Activated CD4-positive, alpha-beta T cell treated with anti-CD3 and anti-CD28 coated beads, Interleukin-2, amount 10 ng/mL, durations not matched to agents 24 days and 14 days (primary cell): ENCODE measurements at regions of chr5 and their contacts with region 1.

Region 1: DNA sequence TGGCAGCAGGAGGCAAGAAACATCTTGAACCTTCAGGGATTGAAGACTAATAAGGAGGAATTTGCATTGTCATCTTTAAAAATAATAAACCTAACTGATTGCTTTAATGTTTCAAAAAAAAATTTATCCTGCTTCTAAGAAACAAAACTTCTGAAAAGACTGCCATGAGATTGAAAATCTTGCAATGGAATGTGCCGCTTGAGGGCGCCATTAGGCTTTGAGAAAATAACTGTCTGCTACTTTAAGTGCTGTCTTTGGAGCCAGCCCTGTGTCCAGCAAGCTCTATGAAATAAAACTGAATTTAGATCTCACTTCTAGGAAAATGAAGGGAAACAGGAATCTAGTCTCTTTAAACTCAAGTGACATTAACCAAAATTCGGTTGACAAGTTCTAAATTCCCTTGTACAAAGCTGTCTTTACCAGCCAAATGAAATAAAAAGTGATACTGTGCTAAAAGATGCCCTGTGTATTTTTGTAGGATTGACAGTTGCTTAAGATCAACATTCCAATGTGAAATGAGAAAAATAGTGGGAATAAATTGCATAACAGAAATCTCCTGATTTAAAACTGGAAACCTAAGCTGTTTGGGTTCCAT is 79.4 kb downstream of the ESM1 start:
- DNase-seq: peak; percentile 92
- H3K4me3 Mint-ChIP-seq: no peak overlapping the region
- H3K27ac Mint-ChIP-seq: no peak overlapping the region
- H3K4me1 Mint-ChIP-seq: peaks cover 50% of the 10 kb centered on the region
- H3K27me3 Mint-ChIP-seq: peaks cover 40% of the 10 kb centered on the region

Region 2: DNA sequence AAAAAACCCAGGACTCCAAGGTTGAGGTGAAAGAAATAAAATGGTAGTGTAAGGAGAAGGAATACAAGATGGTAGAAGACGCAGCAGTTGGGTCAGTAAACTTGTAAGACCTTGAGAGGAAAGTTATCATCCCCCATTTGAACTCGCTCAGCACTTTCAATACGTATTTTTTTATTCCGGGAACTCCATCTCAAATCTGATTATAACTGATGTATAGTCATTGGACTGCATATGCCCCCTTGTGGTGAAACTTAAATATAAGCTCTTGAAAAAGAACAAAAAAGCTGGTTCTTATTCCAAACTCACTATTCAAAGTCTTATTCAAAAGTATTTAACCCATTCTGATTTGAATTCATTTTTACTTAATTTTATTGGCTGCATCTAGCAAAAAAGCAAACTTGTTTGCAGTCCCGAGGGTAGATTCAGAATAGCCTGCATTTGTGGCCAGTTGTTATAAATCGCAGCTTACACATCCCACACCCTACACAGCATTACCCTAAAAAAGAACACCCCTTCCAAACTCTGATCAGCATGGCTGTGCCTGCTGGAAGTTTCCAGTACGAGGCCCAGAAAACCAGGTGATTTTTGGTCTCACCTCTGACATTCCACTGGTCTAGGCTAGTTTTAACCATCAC is 38.6 kb before region 1 on chr5:
- intact Hi-C with region 1: loop called (anchors 1 kb)
- DNase-seq: peak; percentile 67
- H3K4me3 Mint-ChIP-seq: no peak overlapping the region
- H3K27ac Mint-ChIP-seq: no peak overlapping the region
- H3K4me1 Mint-ChIP-seq: peaks cover 22% of the 10 kb centered on the region
- H3K27me3 Mint-ChIP-seq: peaks cover 65% of the 10 kb centered on the region

Region 3: GRCh38 chr5:54944364-54944763 is 38.3 kb after region 1 on chr5:
- intact Hi-C with region 1: loop called (anchors 1 kb)
- DNase-seq: peak; percentile 84
- H3K4me3 Mint-ChIP-seq: no peak overlapping the region
- H3K27ac Mint-ChIP-seq: no peak overlapping the region
- H3K4me1 Mint-ChIP-seq: peaks cover 17% of the 10 kb centered on the region
- H3K27me3 Mint-ChIP-seq: peaks cover 9% of the 10 kb centered on the region

Region 4: GRCh38 chr5:55072666-55073065 is 166.6 kb after region 1 on chr5:
- intact Hi-C with region 1: loop called (anchors 2 kb)
- DNase-seq: peak; percentile 83
- H3K4me3 Mint-ChIP-seq: peak overlapping the region; percentile 65
- H3K27ac Mint-ChIP-seq: peak overlapping the region; percentile 87
- H3K4me1 Mint-ChIP-seq: peaks cover 41% of the 10 kb centered on the region
- H3K27me3 Mint-ChIP-seq: no peaks in the 10 kb centered on the region

Region 5: DNA sequence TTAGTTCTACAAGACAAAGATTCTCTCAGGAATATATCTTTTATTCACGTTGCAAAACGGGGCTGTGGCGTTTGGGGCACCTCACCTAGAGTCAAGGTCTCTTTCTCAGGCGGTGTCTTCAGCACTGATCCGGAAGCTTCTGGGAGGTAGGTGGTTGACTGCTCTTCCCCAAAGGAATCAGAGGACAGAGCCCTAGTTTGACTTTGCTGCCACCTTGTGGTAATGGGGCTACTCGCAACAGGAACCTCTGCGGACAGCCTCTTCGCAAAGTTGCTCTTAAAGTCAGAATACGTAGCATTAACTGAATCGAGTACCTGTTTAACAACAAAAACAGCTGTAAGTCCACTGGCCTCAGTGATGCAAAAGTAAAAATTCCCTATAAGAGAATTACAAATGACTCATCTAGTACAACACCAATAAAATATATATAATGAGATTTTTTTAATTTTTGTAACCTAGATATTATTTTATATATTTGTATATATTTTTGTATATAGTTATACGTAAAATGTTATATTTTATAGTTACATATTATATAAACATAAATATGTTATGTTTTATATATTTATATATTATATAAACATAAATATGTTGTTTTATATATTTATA is 240.6 kb after region 1 on chr5:
- intact Hi-C with region 1: loop called (anchors 1 kb)
- DNase-seq: peak; percentile 96
- H3K4me3 Mint-ChIP-seq: peak overlapping the region; percentile 53
- H3K27ac Mint-ChIP-seq: peak overlapping the region; percentile 62
- H3K4me1 Mint-ChIP-seq: peaks cover 32% of the 10 kb centered on the region
- H3K27me3 Mint-ChIP-seq: peaks cover 46% of the 10 kb centered on the region

Region 6: GRCh38 chr5:55232985-55233928 is 327.2 kb after region 1 on chr5 and contains the start of gene CCNO:
- intact Hi-C with region 1: loop called (anchors 5 kb)
- DNase-seq: peak; percentile 90
- H3K4me3 Mint-ChIP-seq: peak within 1 kb of the TSS; percentile 86
- H3K27ac Mint-ChIP-seq: peak within 1 kb of the TSS; percentile 71
- H3K4me1 Mint-ChIP-seq: peaks cover 29% of the 10 kb centered on the region
- H3K27me3 Mint-ChIP-seq: peaks cover 78% of the 10 kb centered on the region
- total RNA-seq, gene CCNO: 0.26 TPM in 1 of 2 replicates, not detected in the other